ENCODE measurements at regions of chr2 and their contacts with region 1.

Region 1: DNA sequence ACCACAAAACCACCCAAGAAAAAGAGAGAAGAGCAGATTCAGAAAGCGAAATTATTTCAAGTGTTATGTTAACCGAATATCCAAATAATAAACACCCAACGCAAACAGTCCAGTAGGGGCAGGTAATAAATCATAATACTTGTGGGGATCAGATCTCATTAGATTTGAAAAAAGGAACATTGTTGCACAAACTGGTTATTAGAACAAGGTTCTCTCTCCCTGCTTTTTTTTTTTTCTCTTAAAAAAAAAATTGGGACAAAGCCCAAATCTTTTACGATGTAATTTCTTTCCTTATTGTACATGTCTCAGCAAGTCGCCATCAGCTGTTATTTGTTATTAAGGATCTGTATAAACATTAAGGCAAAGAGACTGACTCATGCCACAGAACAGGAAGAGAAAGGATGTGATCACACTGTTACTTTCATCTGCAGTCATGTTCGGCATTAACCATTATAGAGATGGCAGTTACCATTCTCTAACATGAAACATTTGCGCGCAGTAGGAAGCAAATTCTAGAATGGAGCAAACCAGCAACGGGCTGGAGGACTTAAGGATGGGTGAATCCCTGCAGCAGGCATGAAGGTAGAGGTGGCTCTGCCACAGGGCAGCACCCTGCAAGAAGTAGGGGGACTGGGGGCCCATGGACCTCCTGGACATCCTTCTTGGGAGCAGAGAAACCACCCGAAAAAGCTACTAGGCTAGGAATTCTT is 42.0 kb downstream of the EPHA4 start:
- DNase-seq: no peak
- H3K4me3 Mint-ChIP-seq: peak overlapping the region; percentile 68
- H3K27ac Mint-ChIP-seq: peak overlapping the region; percentile 82
- H3K4me1 Mint-ChIP-seq: peaks cover 61% of the 10 kb centered on the region
- H3K27me3 Mint-ChIP-seq: no peaks in the 10 kb centered on the region

Region 2: GRCh38 chr2:221546505-221547225 is 16.6 kb after region 1 on chr2:
- CTCF ChIA-PET with region 1: interaction called, 5 read pairs
- POLR2A ChIA-PET with region 1: no interaction called
- intact Hi-C with region 1: loop called (anchors 2 kb)
- DNase-seq: no peak
- H3K4me3 Mint-ChIP-seq: no peak overlapping the region
- H3K27ac Mint-ChIP-seq: no peak overlapping the region
- H3K4me1 Mint-ChIP-seq: peaks cover 27% of the 10 kb centered on the region
- H3K27me3 Mint-ChIP-seq: no peaks in the 10 kb centered on the region

Measured in activated CD4-positive, alpha-beta memory T cell treated with anti-CD3 and anti-CD28 coated beads for 36 hours (primary cell).